Activated B cell treated with CpG ODN at 0.5 μM for 24 hours (primary cell): ENCODE measurements at regions of chr10 and their contacts with region 1.

Region 1: DNA sequence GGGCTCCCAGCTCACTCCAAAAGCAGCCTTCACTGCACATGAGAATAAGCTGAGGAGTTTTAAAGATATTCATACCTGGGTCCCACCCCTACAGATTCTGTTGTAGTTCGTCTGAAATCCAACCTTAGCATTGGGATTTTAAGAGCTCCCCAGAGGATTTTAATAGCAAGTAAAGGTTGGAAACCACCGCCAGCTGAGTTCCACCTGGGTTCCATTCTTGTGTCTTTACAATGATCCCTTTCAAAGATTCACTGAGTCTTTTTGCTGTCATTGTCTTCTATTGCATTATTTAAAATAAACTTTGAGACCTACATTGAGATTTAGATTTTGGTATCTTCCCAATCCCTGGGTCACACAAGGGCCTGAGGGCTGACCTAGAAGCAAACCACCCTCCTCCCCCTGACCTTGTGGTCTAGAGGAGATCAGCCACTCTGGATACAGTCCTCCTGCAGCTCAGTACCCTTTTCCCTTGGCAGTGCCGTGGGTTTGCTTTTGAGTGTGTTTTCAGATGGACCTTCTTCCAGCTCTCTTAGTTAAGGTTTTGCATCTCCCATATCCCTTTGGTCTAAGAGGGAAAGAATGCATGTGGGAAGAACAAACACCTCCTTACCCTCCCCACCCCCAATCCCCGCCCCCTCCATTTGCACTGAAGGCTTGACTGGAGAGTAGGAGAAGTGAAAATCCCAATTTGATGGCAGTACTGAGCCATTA is 22.6 kb upstream of the SIRT1 start:
- DNase-seq: no peak
- ATAC-seq: no peak
- H3K4me3 Mint-ChIP-seq: no peak overlapping the region
- H3K27ac Mint-ChIP-seq: no peak overlapping the region
- H3K4me1 Mint-ChIP-seq: peaks cover 23% of the 10 kb centered on the region
- H3K27me3 Mint-ChIP-seq: no peaks in the 10 kb centered on the region
- CTCF ChIP-seq: no peak

Region 2: DNA sequence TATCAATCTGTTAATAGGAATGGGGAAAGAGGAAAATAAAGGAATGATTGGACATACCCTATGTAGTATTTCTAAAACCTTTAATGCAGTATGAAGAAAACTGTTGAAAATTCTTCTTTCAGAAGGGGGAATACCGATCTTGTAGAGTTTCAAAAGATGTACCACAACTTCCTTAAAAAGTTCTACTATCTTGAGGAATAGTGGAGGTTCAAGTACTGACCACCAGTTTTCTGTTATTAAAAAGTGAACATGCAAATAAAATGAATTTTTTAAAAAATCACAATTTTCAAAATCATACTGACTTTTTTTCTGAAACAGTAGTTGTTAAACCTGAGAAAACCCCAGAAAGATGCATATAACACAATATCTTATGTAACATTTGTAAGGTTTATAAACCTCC is 126.7 kb after region 1 on chr10:
- CTCF ChIA-PET with region 1: interaction called, 3 read pairs
- POLR2A ChIA-PET with region 1: no interaction called
- intact Hi-C with region 1: loop called (anchors 5 kb)
- DNase-seq: no peak
- ATAC-seq: no peak
- H3K4me3 Mint-ChIP-seq: no peak overlapping the region
- H3K27ac Mint-ChIP-seq: no peak overlapping the region
- H3K4me1 Mint-ChIP-seq: peaks cover 11% of the 10 kb centered on the region
- H3K27me3 Mint-ChIP-seq: no peaks in the 10 kb centered on the region
- CTCF ChIP-seq: no peak

Region 3: GRCh38 chr10:68208424-68209042 is 346.6 kb after region 1 on chr10:
- CTCF ChIA-PET with region 1: no interaction called
- POLR2A ChIA-PET with region 1: no interaction called
- intact Hi-C with region 1: loop called (anchors 5 kb)
- DNase-seq: no peak
- ATAC-seq: no peak
- H3K4me3 Mint-ChIP-seq: no peak overlapping the region
- H3K27ac Mint-ChIP-seq: no peak overlapping the region
- H3K4me1 Mint-ChIP-seq: no peaks in the 10 kb centered on the region
- H3K27me3 Mint-ChIP-seq: peaks cover 9% of the 10 kb centered on the region
- CTCF ChIP-seq: no peak

Region 4: DNA sequence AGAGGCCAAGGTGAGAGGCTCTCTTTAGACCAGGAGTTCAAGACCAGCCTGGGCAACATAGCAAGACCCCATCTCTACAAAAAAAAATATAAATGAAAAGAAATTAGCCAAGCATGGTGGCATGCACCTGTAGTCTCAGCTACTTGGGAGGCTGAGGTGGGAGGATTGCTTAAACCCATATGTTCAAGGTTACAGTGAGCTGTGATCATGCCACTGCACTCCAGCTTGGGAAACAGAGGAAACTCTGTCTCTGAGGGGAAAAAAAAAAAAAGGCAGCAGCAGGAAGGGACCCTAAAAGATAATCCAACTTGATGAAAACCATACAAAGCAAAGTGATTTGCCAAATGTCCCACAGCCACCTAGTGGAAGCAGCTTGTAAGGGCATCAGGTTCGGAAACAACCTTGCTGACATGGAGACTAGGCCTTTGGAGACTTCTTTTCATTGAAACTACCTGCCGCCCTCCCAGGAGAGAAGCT is 486.4 kb after region 1 on chr10:
- CTCF ChIA-PET with region 1: no interaction called
- POLR2A ChIA-PET with region 1: no interaction called
- intact Hi-C with region 1: loop called (anchors 5 kb)
- DNase-seq: no peak
- ATAC-seq: peak; percentile 73
- H3K4me3 Mint-ChIP-seq: no peak overlapping the region
- H3K27ac Mint-ChIP-seq: peak overlapping the region; percentile 56
- H3K4me1 Mint-ChIP-seq: peaks cover 2% of the 10 kb centered on the region
- H3K27me3 Mint-ChIP-seq: no peaks in the 10 kb centered on the region
- CTCF ChIP-seq: no peak